Esophagus muscularis mucosa (tissue), 4 donors: ENCODE measurements at regions of chr10 and their contacts with region 1.

Region 1: DNA sequence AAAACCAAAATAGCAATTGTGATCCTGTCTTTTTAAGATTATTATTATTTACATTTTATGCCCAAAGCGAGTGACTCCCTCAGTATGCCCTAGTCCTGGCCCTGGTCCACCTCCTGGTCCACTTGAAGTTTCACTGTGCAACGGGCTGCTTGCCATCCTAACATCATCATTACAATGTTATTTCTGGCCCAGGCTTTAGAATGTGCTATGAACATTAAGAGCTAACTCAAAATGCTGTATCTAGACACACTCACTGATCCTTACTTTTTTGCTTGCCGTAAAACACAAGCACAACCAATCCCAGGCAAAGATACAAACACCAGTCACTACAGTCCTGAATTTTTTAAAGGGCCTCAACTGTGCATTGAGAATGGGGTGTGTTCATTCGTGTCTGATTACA is 38.4 kb downstream of the RHOBTB1 start:
- DNase-seq: no peak
- H3K4me3 ChIP-seq: no peak overlapping the region
- H3K27ac ChIP-seq: peak overlapping the region; percentile 24 to 66 (median 53)
- H3K4me1 ChIP-seq: peaks cover 63 to 79% (median 66%) of the 10 kb centered on the region in 4 donors
- H3K27me3 ChIP-seq: no peaks in the 10 kb centered on the region
- CTCF ChIP-seq: no peak
- EP300 ChIP-seq: no peak
- POLR2A ChIP-seq: no peak

Region 2: DNA sequence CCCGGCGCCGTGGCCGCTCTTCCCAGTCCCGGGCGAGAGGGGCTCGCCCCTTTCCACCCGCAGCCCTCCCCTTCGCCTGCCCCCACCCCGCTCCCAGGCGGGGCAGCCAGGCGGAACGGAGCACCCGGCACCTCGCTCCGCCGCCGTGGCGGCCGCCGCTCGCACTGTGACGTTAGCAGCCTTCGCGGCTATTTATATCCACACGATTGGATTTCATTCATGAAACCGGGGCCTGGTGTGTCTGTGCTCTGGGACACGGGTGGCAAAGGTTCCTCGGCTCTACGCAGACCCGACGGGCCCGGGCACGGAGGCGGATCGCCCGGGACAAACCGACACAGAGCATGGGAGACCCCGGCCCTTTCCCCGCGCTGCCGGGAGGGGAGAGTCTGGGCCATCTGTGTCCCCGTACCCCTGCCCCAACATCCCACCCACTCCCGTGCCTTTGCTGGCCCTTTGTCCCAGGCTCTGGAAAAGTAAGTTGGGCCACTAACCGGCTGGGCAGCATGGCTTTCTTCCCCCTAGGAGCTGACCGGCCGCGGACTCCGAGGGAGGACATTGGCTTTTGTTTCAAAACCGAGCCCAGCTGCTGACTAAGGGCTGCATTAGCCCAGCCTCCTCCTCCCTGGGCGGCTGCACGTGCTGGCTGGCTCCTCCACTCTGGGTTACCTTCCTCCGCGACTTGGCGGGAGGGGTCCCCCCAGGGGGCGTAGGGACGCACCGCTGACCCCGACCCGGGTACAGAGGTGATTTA is 38.8 kb after region 1 on chr10 and contains the start of gene RHOBTB1:
- intact Hi-C with region 1: loop called (anchors 5 kb)
- DNase-seq: peak; percentile 93
- H3K4me3 ChIP-seq: peak within 1 kb of the TSS; percentile 78 to 94 (median 86)
- H3K27ac ChIP-seq: peak within 1 kb of the TSS; percentile 96 to 98 (median 96)
- H3K4me1 ChIP-seq: peaks cover 15 to 40% (median 36%) of the 10 kb centered on the region in 4 donors
- H3K27me3 ChIP-seq: no peaks in the 10 kb centered on the region
- CTCF ChIP-seq: no peak
- EP300 ChIP-seq: no peak
- POLR2A ChIP-seq: peak; percentile 84
- total RNA-seq, gene RHOBTB1: 16.7 to 39.2 (median 20.1) TPM